Caco-2 (cell line): ENCODE measurements at regions of chr6 and their contacts with region 1.

Region 1: DNA sequence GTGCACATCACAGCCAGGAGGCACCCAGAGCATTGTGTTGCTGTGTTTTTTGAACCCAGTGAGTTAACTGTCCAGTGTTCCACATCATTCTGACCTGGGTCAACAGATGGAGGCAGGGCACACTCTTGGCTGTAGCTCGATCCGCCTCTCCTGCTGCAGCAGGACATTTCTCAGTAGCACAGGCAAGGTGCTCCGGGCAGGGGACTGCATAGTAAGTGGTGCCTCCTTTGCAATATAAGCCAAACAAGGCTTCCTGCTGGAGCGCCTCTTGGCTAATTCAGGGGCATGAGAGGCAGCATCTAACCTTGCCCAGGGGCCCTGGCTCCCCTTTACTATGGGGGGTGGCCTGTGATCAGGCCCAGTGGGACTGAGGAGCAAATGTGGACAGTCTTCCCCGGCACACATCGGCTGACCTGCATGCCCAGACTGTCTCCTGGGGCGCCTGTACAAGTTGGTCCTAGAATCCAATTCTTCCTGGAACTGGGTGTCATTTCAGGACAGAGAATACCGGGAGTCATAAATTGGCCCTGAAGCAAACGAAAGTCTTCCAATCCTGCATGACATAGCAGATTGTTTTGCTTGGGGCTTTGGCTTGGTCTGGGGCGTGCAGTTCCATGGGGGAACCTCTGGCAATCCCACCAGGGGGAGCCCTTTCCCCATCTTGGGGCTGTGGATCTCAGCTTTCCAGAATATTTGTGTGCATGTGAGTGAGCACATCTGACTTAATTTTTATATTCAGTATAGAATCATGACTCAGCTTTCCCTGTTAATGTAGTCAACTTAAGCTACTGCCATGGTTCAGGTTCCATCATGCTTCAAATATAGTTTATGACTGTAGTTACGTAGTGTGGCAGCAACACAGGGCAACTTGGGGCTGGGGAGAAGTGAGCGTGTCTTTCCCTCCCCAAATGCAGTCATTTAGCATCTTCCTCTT is 56.0 kb upstream of the DDR1 start:
- DNase-seq: peak; percentile 83 to 91
- H3K4me3 ChIP-seq: no peak overlapping the region
- H3K4me3 Mint-ChIP-seq: no peak overlapping the region
- H3K27ac Mint-ChIP-seq: peak overlapping the region; percentile 43
- H3K4me1 ChIP-seq: peaks cover 16% of the 10 kb centered on the region
- H3K4me1 Mint-ChIP-seq: peaks cover 27% of the 10 kb centered on the region
- H3K27me3 ChIP-seq: no peaks in the 10 kb centered on the region
- H3K27me3 Mint-ChIP-seq: no peaks in the 10 kb centered on the region
- CTCF ChIP-seq: peak; percentile 85 to 89

Region 2: DNA sequence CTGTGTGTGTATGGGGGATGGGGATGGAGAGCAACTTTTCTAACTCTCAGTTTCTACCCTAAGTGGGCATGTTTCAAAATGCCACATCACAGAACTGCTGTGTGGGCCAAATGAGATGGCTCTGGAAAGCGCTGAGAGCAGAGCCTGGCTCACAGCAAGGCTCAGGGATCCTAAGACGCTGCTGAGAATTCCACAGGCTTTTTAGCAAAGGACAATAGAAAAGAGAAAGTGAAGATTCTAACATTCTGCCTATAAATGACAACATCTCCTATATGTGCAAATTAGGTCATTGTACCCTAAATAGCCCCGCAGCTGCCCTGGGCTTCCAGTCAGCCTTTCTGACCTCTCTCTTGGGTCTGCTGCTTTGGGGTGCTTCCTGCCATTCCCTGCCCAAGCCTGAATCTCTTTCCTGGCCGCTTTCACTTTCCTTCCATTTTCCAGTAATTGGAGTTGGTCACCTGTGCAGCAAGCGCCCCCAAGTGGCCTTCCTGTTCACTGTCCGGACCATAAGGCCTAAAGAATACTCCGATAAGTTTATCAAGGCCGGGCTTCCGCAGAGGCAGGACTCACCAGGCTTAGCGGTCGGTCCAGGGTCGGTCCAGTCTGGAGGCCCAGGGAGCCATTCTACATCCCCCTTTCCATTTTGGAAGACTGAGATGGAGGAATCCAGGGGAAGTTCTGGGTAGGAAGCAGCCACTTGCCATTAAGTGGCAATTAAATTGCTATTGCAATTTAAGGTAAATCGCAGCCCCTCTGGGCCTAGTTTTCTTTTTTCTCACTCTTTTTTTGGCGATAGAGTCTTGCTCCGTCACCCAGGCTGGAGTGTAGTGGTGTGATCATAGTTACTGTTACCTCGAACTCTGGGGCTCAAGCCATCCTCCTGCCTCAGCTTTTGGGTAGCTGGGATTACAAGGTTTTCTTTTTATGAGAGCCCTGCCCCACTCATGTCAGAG is 49.4 kb after region 1 on chr6:
- CTCF ChIA-PET with region 1: interaction called, 13 read pairs
- POLR2A ChIA-PET with region 1: no interaction called
- intact Hi-C with region 1: loop called (anchors 1 kb)
- DNase-seq: peak; percentile 86
- H3K4me3 ChIP-seq: peak overlapping the region; percentile 10; the same call in 1 of the 2 replicates
- H3K4me3 Mint-ChIP-seq: peak overlapping the region; percentile 30
- H3K27ac Mint-ChIP-seq: no peak overlapping the region
- H3K4me1 ChIP-seq: peaks cover 12% of the 10 kb centered on the region
- H3K4me1 Mint-ChIP-seq: peaks cover 13% of the 10 kb centered on the region
- H3K27me3 ChIP-seq: no peaks in the 10 kb centered on the region
- H3K27me3 Mint-ChIP-seq: no peaks in the 10 kb centered on the region
- CTCF ChIP-seq: peak; percentile 89 to 90